ENCODE measurements at regions of chr17 and their contacts with region 1.

Region 1: GRCh38 chr17:61545335-61545938 is 45.6 kb downstream of the NACA2 start:
- DNase-seq: no peak
- ATAC-seq: no peak

Region 2: GRCh38 chr17:61416540-61417363 is 128.7 kb before region 1 on chr17:
- intact Hi-C with region 1: loop called (anchors 5 kb)
- DNase-seq: peak; percentile 94
- ATAC-seq: peak; percentile 79

Region 3: GRCh38 chr17:61463316-61463976 is 82.0 kb before region 1 on chr17:
- intact Hi-C with region 1: no loop called
- DNase-seq: no peak
- ATAC-seq: no peak

Region 4: GRCh38 chr17:61475398-61476113 is 69.9 kb before region 1 on chr17:
- intact Hi-C with region 1: no loop called
- DNase-seq: no peak
- ATAC-seq: no peak

Measured in left ventricle myocardium superior (tissue), 1 donor.